A673 (cell line): ENCODE measurements at regions of chr22 and their contacts with region 1.

Region 1: DNA sequence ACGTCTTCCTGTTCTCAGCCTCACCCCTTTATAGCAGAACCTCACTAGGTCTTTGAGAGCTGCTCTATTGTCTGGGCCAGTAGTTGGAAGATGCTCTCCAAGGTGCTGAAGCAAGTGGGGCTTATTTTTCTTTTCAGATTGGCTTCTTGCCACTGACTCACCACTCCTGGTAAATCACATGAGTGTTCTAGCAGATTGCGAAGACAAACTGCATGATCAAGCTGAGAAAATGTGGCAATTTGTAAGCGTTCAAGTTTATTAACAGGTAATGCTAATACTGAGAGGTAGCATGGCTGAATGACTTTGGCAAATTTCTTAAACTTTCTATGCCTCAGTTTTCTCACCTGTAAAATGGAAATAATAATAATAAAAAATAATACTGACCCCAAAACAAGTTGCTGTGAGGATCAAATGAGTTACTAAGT is 59.2 kb downstream of the CACNG2 start:
- DNase-seq: peak; percentile 87
- H3K4me3 ChIP-seq: no peak overlapping the region
- H3K27ac ChIP-seq: no peak overlapping the region
- H3K4me1 ChIP-seq: peaks cover 8% of the 10 kb centered on the region
- H3K27me3 ChIP-seq: peaks cover 43% of the 10 kb centered on the region
- CTCF ChIP-seq: no peak

Region 2: DNA sequence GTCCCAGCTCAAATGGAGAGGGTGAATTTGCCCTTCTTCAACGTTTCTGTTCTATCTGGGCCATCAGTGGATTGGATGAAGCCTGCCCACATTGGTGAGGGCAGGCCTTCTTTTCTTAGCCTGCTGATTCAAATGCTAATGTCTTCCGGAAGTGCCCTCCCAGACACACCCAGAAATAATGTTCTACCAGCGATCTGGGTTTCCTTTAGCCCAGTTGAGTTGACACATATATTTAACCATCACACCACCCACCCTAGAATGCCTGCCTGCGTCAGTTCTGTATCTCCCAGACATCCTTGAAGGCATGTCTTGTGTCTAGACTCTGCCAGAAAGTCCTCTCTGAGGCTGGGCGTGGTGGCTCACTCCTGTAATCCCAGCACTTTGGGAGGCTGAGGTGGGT is 24.5 kb after region 1 on chr22:
- CTCF ChIA-PET with region 1: no interaction called
- POLR2A ChIA-PET with region 1: no interaction called
- intact Hi-C with region 1: no loop called
- DNase-seq: peak; percentile 28
- H3K4me3 ChIP-seq: no peak overlapping the region
- H3K27ac ChIP-seq: no peak overlapping the region
- H3K4me1 ChIP-seq: no peaks in the 10 kb centered on the region
- H3K27me3 ChIP-seq: no peaks in the 10 kb centered on the region
- CTCF ChIP-seq: no peak

Region 3: GRCh38 chr22:36702842-36703215 is 58.5 kb after region 1 on chr22:
- CTCF ChIA-PET with region 1: no interaction called
- POLR2A ChIA-PET with region 1: no interaction called
- intact Hi-C with region 1: loop called (anchors 2 kb)
- DNase-seq: no peak
- H3K4me3 ChIP-seq: no peak overlapping the region
- H3K27ac ChIP-seq: no peak overlapping the region
- H3K4me1 ChIP-seq: no peaks in the 10 kb centered on the region
- H3K27me3 ChIP-seq: peaks cover 72% of the 10 kb centered on the region
- CTCF ChIP-seq: no peak